Activated naive CD4-positive, alpha-beta T cell treated with anti-CD3 and anti-CD28 coated beads for 36 hours (primary cell): ENCODE measurements at regions of chr1 and their contacts with region 1.

Region 1: GRCh38 chr1:179706339-179706941 is 36.7 kb upstream of the FAM163A start:
- DNase-seq: peak; percentile 83
- H3K4me3 Mint-ChIP-seq: no peak overlapping the region
- H3K27ac Mint-ChIP-seq: no peak overlapping the region
- H3K4me1 Mint-ChIP-seq: peaks cover 23% of the 10 kb centered on the region
- H3K27me3 Mint-ChIP-seq: no peaks in the 10 kb centered on the region

Region 2: GRCh38 chr1:179599623-179600249 is 106.7 kb before region 1 on chr1:
- CTCF ChIA-PET with region 1: no interaction called
- intact Hi-C with region 1: no loop called
- DNase-seq: peak; percentile 37
- H3K4me3 Mint-ChIP-seq: no peak overlapping the region
- H3K27ac Mint-ChIP-seq: no peak overlapping the region
- H3K4me1 Mint-ChIP-seq: no peaks in the 10 kb centered on the region
- H3K27me3 Mint-ChIP-seq: peaks cover 24% of the 10 kb centered on the region

Region 3: DNA sequence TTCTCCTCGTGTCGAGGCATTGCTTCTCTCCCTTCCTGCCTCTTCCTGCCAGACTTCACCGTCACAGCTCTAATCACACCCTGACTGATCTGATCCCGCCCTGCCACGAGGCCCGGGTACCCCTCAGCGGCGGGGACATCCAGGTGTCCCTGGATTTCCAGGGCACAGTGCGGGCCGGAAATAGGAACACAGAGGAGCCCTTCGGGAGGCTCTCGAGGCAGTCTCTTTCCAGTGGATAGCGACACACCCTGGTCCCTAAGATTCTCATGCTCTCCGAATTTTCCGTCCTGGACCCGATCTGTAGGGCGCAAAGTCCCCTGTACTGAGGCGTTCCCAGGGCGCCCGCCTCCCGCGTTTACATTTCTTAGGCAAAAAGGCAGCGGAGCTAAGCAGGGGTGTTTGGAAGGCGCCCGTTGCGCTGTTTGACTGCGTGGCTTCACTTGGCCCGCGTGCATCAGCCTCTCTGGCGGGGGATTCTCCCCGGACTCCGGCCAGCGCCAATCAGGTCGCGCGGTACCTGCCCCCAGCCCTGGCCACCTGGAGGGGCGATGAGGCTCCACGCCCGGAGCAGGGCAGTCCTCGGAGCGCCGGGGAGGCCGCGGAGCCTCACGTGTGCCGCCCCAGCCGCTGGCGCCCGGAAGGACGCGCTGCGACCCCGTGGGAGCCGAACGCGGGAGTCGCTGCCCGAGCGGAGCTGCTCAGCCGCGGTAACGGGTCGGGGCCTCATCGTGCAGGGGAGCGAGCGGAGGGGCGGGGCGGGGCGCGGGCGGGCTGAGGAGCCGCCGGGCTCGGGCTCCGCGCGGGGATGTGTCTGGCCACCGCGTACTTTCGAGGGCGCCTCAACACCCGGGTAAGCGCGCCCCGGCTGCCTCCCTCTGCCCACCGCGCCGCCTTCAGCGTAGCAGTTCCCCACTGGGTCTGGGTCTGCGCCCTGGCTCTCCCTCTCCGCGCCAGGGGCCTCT is 36.6 kb after region 1 on chr1 and contains the start of gene FAM163A:
- CTCF ChIA-PET with region 1: interaction called, 4 read pairs
- intact Hi-C with region 1: loop called (anchors 2 kb)
- DNase-seq: peak; percentile 19
- H3K4me3 Mint-ChIP-seq: peak within 1 kb of the TSS; percentile 47
- H3K27ac Mint-ChIP-seq: no peak within 1 kb of the TSS
- H3K4me1 Mint-ChIP-seq: peaks cover 7% of the 10 kb centered on the region
- H3K27me3 Mint-ChIP-seq: peaks cover 49% of the 10 kb centered on the region
- total RNA-seq, gene FAM163A: 0.10 TPM in 1 of 2 experiments, not detected in the other

Region 4: GRCh38 chr1:179954493-179955297 is 248.3 kb after region 1 on chr1 and contains the start of gene CEP350:
- CTCF ChIA-PET with region 1: no interaction called
- intact Hi-C with region 1: loop called (anchors 10 kb)
- DNase-seq: peak; percentile 99
- H3K4me3 Mint-ChIP-seq: peak within 1 kb of the TSS; percentile 85
- H3K27ac Mint-ChIP-seq: peak within 1 kb of the TSS; percentile 95
- H3K4me1 Mint-ChIP-seq: peaks cover 41% of the 10 kb centered on the region
- H3K27me3 Mint-ChIP-seq: no peaks in the 10 kb centered on the region
- total RNA-seq, gene CEP350: 30.3 to 36.0 TPM

Region 5: GRCh38 chr1:180080433-180080832 is 374.0 kb after region 1 on chr1:
- CTCF ChIA-PET with region 1: no interaction called
- intact Hi-C with region 1: loop called (anchors 10 kb)
- DNase-seq: peak; percentile 8
- H3K4me3 Mint-ChIP-seq: no peak overlapping the region
- H3K27ac Mint-ChIP-seq: no peak overlapping the region
- H3K4me1 Mint-ChIP-seq: peaks cover 2% of the 10 kb centered on the region
- H3K27me3 Mint-ChIP-seq: no peaks in the 10 kb centered on the region

Region 6: DNA sequence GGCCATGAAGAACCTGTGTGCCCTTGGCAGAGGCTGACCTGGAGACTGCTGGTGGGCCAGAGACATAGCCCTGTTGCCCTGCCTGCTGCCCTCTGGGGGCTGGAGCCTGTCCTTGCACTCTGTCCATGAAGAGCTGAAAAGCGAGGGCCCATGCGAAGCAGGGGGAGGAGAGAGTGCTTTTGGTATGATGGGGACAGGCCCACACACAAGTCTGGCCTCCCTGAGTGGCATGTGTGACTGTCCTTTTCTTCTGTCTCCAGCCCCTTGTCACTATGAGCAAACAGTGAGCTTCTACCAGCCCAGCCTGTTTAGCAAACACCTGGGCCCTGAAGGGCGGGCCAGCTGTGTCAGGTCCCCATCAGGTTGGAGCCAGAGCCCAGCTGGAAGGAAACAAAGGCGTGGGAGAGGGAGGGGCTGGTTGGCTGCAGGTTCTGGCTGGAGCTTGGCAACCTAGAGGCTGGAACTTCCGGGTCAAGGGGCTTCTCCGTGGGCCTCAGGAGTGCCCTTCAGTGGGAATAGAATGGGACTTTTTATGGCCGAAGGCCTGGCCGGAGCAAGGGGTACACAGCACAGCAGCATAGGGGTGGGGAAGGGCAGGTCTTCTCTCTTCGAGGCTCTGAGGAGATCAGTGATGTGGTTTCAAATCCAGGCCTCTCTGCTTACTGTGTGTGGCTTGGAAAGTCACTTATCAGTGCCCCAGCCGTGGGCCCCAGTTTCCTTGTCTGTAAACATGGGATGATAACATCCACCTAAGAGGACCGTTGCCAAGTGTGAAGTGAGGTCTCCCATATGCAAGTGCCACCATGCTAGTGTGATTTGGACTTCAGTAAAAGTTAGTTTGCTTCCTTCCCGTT is 462.6 kb after region 1 on chr1:
- CTCF ChIA-PET with region 1: interaction called, 5 read pairs
- intact Hi-C with region 1: loop called (anchors 2 kb)
- DNase-seq: peak; percentile 56
- H3K4me3 Mint-ChIP-seq: no peak overlapping the region
- H3K27ac Mint-ChIP-seq: no peak overlapping the region
- H3K4me1 Mint-ChIP-seq: no peaks in the 10 kb centered on the region
- H3K27me3 Mint-ChIP-seq: no peaks in the 10 kb centered on the region

Region 7: GRCh38 chr1:180415985-180416633 is 709.7 kb after region 1 on chr1:
- CTCF ChIA-PET with region 1: no interaction called
- intact Hi-C with region 1: loop called (anchors 10 kb)
- DNase-seq: no peak
- H3K4me3 Mint-ChIP-seq: no peak overlapping the region
- H3K27ac Mint-ChIP-seq: no peak overlapping the region
- H3K4me1 Mint-ChIP-seq: no peaks in the 10 kb centered on the region
- H3K27me3 Mint-ChIP-seq: no peaks in the 10 kb centered on the region